RWPE1 (cell line): ENCODE measurements at regions of chr14 and their contacts with region 1.

Region 1: GRCh38 chr14:34098045-34098984 is 147.4 kb upstream of the EGLN3 start:
- DNase-seq: peak; percentile 48
- H3K27ac ChIP-seq: no peak overlapping the region
- CTCF ChIP-seq: peak; percentile 69

Region 2: DNA sequence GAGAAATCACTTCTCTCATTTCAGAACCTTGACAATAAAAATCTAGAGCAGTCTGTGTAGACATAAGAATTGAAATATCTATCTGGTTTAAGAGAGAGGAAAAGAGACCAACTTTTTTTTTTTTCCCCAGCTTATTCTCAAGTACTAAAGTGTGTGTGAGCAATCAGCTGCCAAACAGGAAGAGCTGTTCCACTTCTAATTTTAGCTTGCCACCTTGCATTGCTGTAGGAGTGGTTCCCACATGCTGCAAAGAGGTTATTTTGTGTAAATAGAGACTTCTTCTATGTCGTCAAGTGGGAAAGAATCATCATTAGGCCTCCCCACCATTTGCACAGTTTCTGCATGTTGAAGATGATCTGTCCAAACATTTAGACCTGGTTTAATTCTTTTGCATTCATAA is 1017.1 kb before region 1 on chr14:
- CTCF ChIA-PET with region 1: interaction called, 10 read pairs
- POLR2A ChIA-PET with region 1: no interaction called
- DNase-seq: no peak
- H3K27ac ChIP-seq: no peak overlapping the region
- CTCF ChIP-seq: no peak

Region 3: GRCh38 chr14:33839193-33840076 is 258.9 kb before region 1 on chr14:
- CTCF ChIA-PET with region 1: interaction called, 15 read pairs
- POLR2A ChIA-PET with region 1: no interaction called
- DNase-seq: peak; percentile 49
- H3K27ac ChIP-seq: no peak overlapping the region
- CTCF ChIP-seq: peak; percentile 80

Region 4: GRCh38 chr14:33848706-33849454 is 249.4 kb before region 1 on chr14:
- CTCF ChIA-PET with region 1: interaction called, 15 read pairs
- POLR2A ChIA-PET with region 1: interaction called, 5 read pairs
- DNase-seq: peak; percentile 34
- H3K27ac ChIP-seq: no peak overlapping the region
- CTCF ChIP-seq: peak; percentile 23; the same call in 1 of the 2 replicates

Region 5: DNA sequence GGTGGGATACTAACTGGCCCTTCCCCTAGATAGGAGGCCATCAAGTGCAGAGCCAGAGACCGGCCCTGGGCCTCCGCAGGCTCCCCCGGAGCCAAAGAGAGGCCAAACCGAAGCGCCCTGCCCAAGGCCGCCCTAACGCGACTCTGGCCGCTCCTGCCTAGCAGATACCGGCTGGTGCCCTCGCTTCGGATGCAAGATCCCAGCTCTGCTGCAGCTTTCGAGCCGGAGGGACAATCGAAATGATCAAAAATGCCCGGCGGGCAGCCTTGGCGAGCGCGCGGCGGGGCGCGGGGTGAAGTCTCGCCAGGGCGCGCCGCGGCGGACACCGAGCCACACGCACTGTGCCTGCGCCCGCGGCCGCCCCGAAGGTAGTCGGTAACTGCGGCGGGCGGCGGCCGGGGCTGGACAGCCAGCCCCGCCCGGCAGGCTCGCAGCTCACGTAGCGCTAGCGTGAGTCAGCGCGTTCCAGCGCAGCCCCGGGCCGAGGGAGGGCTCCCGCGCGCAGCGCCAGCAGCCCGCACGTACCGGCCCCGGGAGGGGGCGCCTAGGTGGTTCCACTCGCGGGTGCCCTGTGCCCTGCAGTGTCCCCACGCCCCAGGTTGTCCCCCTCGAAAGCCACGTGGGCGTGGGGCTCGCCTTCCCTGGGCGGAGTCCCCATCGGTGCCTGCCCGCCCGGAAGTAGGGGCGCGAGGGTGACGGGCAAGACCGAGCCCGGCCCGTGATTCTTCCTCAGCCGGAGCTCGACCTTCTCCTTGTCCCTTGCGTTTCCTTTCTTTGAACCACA is 38.3 kb before region 1 on chr14:
- CTCF ChIA-PET with region 1: interaction called, 13 read pairs
- POLR2A ChIA-PET with region 1: no interaction called
- DNase-seq: peak; percentile 85
- H3K27ac ChIP-seq: peak overlapping the region; percentile 80
- CTCF ChIP-seq: peak; percentile 23; the same call in 1 of the 2 replicates